ENCODE measurements at regions of chr9 and their contacts with region 1.

Region 1: GRCh38 chr9:105722099-105722498 is 27.8 kb downstream of the TMEM38B start:
- DNase-seq: no peak
- ATAC-seq: no peak
- H3K4me3 ChIP-seq: no peak overlapping the region
- H3K27ac ChIP-seq: no peak overlapping the region
- H3K4me1 ChIP-seq: no peaks in the 10 kb centered on the region
- H3K27me3 ChIP-seq: no peaks in the 10 kb centered on the region
- CTCF ChIP-seq: peak in 1 of 12 donors; percentile 15
- POLR2A ChIP-seq: no peak

Region 2: GRCh38 chr9:105608721-105609598 is 113.1 kb before region 1 on chr9:
- intact Hi-C with region 1: loop called in 8 of 10 experiments (anchors 1 to 10 kb)
- DNase-seq: no peak
- ATAC-seq: peak in 1 of 4 donors; percentile 56
- H3K4me3 ChIP-seq: no peak overlapping the region
- H3K27ac ChIP-seq: no peak overlapping the region
- H3K4me1 ChIP-seq: no peaks in the 10 kb centered on the region
- H3K27me3 ChIP-seq: no peaks in the 10 kb centered on the region
- CTCF ChIP-seq: peak; percentile 44 to 72 (median 58)
- POLR2A ChIP-seq: no peak

Region 3: GRCh38 chr9:105656131-105656921 is 65.8 kb before region 1 on chr9:
- intact Hi-C with region 1: loop called in 8 of 10 experiments (anchors 1 to 10 kb)
- DNase-seq: peak; percentile 8 to 70 (median 28)
- ATAC-seq: peak; percentile 49 to 94 (median 84)
- H3K4me3 ChIP-seq: peak overlapping the region; percentile 39 to 65 (median 58)
- H3K27ac ChIP-seq: no peak overlapping the region
- H3K4me1 ChIP-seq: peaks cover 0 to 15% (median 5%) of the 10 kb centered on the region in 12 donors
- H3K27me3 ChIP-seq: peaks cover 0 to 26% (median 2%) of the 10 kb centered on the region in 9 donors
- CTCF ChIP-seq: peak; percentile 8 to 61 (median 44)
- POLR2A ChIP-seq: no peak